HEK293T (cell line): ENCODE measurements at regions of chr2 and their contacts with region 1.

Region 1: DNA sequence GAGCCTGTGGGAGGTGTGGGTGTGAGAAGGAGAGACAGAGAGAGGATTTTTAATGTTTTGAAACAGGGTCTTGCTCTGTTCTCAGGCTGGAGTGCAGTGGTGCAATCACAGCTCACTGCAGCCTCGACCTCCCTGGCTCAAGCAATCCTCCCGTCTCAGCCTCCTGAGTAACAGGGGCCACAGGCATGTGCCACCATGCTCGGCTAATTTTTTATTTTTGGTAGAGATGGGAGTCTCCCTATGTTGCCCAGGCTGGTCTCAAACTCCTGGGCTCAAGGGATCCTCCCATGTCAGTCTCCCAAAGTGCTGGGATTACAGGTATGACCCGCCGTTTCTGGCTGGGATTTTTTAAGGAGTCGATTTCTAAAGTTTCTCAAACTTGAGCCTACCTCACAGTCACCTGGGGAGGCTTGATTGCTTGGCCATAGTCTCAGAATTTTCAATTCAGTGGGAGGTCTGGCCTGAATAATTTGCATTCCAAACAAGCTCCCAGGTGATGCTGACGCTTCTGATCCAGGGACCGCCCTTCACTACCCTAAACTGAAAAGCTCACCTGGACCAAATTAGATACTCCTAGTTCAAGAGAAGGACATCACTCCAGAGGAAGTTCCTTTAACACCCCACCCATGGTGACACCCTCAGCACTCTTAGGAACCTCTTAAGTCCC is 70.8 kb upstream of the SLC1A4 start:
- DNase-seq: no peak

Region 2: GRCh38 chr2:64904413-64905329 is 13.7 kb before region 1 on chr2:
- CTCF ChIA-PET with region 1: interaction called, 10 read pairs
- POLR2A ChIA-PET with region 1: no interaction called
- DNase-seq: no peak

Region 3: GRCh38 chr2:64931246-64932115 is 13.1 kb after region 1 on chr2:
- CTCF ChIA-PET with region 1: no interaction called
- POLR2A ChIA-PET with region 1: no interaction called
- DNase-seq: no peak

Region 4: GRCh38 chr2:65031341-65032018 is 113.1 kb after region 1 on chr2:
- CTCF ChIA-PET with region 1: interaction called, 11 read pairs
- POLR2A ChIA-PET with region 1: interaction called, 3 read pairs
- DNase-seq: no peak

Region 5: DNA sequence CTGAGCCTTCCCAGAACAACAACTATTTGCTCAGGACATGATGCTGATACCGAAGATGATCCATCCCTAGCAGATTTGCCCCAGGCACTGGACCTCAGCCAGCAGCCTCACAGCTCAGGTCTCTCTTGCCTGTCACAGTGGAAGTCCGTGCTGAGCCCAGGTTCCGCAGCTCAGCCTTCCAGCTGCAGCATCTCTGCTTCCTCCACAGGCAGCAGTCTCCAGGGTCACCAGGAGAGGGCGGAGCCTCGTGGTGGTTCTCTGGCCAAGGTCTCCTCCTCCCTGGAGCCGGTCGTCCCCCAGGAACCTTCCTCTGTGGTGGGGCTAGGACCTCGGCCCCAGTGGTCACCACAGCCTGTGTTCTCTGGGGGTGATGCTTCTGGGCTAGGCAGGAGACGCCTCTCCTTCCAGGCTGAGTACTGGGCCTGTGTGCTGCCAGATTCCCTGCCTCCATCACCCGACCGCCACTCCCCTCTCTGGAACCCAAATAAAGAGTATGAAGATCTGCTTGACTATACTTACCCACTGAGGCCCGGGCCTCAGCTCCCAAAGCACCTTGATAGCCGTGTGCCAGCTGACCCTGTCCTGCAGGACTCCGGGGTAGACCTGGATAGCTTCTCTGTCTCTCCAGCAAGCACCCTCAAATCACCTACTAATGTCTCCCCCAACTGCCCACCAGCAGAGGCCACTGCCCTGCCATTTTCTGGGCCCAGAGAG is 153.3 kb after region 1 on chr2:
- CTCF ChIA-PET with region 1: no interaction called
- POLR2A ChIA-PET with region 1: no interaction called
- DNase-seq: peak; percentile 34